Calu3 (cell line): ENCODE measurements at regions of chr10 and their contacts with region 1.

Region 1: DNA sequence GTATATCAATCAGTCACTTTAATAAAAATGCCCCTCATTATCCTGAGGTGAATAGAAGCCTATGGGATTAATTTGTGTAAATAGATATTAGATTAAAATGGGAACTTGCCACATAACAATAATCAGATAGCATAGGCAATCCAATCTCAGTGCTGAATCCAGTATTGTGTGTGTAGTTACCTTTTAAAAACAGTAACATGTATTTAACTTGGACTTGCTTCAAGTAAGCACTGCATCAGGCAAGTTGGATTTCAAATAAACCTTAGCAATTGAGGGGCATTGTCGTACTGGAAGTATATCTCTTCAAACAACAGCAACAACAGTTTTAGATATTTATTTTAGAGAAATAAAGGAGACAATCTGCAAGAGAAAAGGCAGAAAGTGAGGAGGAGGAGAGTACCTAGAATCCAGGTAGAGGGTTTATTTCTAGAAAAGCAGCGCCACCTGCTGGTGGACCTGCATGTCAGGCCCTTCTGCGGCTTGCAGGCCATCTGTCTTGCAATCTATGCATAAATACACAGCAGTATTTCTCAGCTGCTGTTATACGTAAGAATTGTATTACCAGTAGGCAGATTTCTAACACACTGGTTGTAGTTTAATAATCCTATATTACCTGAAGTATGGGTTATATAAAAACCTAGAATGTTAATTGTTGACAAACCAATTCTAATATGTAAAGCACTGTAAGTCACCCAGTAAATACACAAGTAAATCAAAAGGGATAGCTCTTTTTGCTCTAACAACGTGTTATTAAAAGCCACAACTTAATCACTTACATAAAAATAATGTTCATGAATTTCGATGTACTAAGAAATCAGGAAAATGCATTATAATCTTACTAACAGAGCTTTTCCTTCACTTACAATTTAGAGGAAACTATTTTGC is 652.8 kb downstream of the KCNMA1 start:
- DNase-seq: peak; percentile 86
- H3K4me3 Mint-ChIP-seq: no peak overlapping the region
- H3K27ac Mint-ChIP-seq: no peak overlapping the region
- H3K4me1 Mint-ChIP-seq: no peaks in the 10 kb centered on the region
- H3K27me3 Mint-ChIP-seq: peaks cover 58% of the 10 kb centered on the region
- CTCF ChIP-seq: peak; percentile 90

Region 2: DNA sequence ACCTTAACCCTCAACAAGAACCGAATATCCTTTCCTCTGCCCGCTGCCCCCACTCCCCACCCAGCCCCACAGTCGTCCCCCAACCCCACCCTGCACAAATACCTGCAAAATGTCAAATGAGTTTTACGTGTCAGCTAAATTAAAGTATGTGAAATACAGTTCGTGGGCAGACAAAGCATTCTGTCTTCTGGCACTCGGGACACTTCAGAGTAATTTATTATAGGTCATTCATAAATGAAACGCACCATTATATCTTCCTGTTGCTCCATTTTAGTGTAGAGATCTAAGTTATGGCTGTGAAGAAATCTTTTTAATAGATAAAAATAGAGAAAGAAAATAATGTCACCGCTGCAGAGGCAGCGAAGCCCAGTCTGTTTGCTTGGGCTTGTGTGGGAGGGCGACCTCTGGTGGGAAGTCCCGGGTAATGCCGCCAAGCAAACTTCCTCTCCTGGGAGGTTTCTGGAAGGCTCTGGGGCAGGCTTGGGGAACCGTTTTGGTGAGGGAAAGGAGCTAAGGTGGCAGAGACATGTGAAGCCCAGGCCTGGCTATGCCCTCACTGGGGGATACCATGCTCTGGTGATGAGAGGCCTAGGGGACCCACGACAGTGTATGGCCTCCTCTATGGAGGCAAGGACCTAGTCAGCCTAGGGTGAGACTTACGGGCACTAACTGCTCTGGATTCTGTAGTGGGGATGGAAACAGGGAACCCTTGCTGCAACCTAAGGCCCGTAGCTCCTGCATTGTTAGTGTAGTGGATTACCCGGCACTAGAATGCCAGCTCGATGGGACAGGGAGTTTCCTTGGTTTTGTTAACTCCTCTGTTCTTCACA is 948.5 kb before region 1 on chr10:
- CTCF ChIA-PET with region 1: no interaction called
- intact Hi-C with region 1: loop called (anchors 10 kb)
- DNase-seq: peak; percentile 87
- H3K4me3 Mint-ChIP-seq: no peak overlapping the region
- H3K27ac Mint-ChIP-seq: no peak overlapping the region
- H3K4me1 Mint-ChIP-seq: peaks cover 20% of the 10 kb centered on the region
- H3K27me3 Mint-ChIP-seq: no peaks in the 10 kb centered on the region
- CTCF ChIP-seq: peak; percentile 92

Region 3: DNA sequence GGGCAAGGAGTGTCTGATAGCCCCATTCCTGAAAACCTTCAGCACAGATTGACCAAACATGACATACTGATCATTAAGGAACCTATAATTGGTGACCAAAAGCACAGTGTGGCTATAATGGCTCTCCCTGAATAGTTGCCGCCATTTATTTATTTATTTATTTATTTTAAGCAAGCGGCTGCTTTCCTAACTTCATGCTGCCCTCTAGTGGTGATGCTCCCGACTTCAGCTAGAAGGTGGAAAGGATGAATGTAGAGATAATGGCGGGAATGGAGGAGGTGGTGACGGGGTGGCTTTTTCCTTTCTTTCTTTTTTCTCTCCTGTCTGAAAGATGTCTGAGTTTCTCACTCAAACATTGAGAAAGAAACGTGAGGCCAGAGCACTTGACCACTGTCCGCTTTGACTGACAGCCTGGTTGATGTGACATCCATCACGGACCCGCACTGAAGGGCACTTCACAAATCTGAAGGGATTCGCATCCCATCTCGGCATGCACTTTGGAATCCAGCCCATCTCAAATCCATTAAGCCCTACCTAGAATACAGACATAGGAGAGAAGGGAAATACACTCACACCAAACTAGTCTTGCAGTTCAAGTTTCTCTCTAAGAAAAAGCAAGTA is 437.3 kb before region 1 on chr10:
- CTCF ChIA-PET with region 1: interaction called, 3 read pairs
- intact Hi-C with region 1: loop called (anchors 2 kb)
- DNase-seq: peak; percentile 85
- H3K4me3 Mint-ChIP-seq: no peak overlapping the region
- H3K27ac Mint-ChIP-seq: no peak overlapping the region
- H3K4me1 Mint-ChIP-seq: no peaks in the 10 kb centered on the region
- H3K27me3 Mint-ChIP-seq: peaks cover 8% of the 10 kb centered on the region
- CTCF ChIP-seq: peak; percentile 73

Region 4: GRCh38 chr10:76925636-76926405 is 59.0 kb before region 1 on chr10:
- CTCF ChIA-PET with region 1: no interaction called
- intact Hi-C with region 1: no loop called
- DNase-seq: no peak
- H3K4me3 Mint-ChIP-seq: no peak overlapping the region
- H3K27ac Mint-ChIP-seq: no peak overlapping the region
- H3K4me1 Mint-ChIP-seq: no peaks in the 10 kb centered on the region
- H3K27me3 Mint-ChIP-seq: no peaks in the 10 kb centered on the region
- CTCF ChIP-seq: no peak